Dorsolateral prefrontal cortex (tissue), 120 donors: ENCODE measurements at regions of chr5 and their contacts with region 1.

Region 1: GRCh38 chr5:124236361-124237205 is 509.9 kb downstream of the ZNF608 start:
- DNase-seq: no peak
- H3K4me3 ChIP-seq: peak overlapping the region in 12 of 59 donors; percentile 2 to 35 (median 18)
- H3K27ac ChIP-seq: peak overlapping the region; percentile 20 to 98 (median 94)
- H3K27me3 ChIP-seq: no peaks in the 10 kb centered on the region
- CTCF ChIP-seq: no peak

Region 2: DNA sequence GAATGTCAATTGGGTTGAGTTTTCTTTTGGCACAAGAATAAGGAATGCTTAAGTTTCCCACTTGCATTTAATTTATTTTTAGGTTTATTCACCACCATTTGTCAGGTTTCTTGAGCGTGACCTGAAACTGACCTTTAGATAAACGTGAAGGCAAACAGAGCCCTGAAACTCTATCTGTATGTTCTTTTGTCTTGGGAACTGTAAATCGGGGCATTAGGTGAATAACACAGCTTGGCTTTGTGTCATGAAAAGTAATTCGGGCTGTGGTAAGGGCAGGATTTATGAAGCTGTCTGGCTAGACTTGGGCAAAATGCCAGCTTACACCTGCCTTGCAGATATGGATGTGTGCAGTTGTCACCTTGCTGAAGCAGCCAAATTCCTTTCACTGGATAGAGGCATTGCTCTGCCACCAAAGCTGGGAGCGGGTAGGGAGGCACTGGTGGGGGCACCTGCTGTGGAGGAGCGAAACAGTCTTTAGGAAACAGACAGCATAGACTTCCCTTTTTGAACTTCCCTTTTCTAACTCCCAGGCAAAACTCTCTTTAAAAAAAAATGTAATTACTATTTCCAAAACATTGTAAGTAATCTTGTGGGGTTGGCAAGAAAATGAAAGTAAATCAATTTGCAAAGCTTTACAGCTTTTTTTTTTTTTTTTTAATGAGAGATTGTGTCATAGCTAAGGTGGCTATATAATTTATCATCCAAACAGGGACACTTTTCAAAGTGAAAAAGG is 179.4 kb before region 1 on chr5:
- intact Hi-C with region 1: no loop called
- DNase-seq: peak in 1 of 10 donors; percentile 29
- H3K4me3 ChIP-seq: peak overlapping the region in 43 of 59 donors; percentile 1 to 54 (median 26)
- H3K27ac ChIP-seq: peak overlapping the region in 20 of 59 donors; percentile 3 to 68 (median 36)
- H3K27me3 ChIP-seq: no peaks in the 10 kb centered on the region
- CTCF ChIP-seq: no peak

Region 3: GRCh38 chr5:124274949-124275348 is 38.4 kb after region 1 on chr5:
- intact Hi-C with region 1: no loop called
- DNase-seq: no peak
- H3K4me3 ChIP-seq: no peak overlapping the region
- H3K27ac ChIP-seq: no peak overlapping the region
- H3K27me3 ChIP-seq: no peaks in the 10 kb centered on the region
- CTCF ChIP-seq: no peak

Region 4: GRCh38 chr5:124343451-124343867 is 106.9 kb after region 1 on chr5:
- intact Hi-C with region 1: loop called in 1 of 2 experiments (anchors 10 kb)
- DNase-seq: no peak
- H3K4me3 ChIP-seq: no peak overlapping the region
- H3K27ac ChIP-seq: no peak overlapping the region
- H3K27me3 ChIP-seq: no peaks in the 10 kb centered on the region
- CTCF ChIP-seq: no peak

Region 5: DNA sequence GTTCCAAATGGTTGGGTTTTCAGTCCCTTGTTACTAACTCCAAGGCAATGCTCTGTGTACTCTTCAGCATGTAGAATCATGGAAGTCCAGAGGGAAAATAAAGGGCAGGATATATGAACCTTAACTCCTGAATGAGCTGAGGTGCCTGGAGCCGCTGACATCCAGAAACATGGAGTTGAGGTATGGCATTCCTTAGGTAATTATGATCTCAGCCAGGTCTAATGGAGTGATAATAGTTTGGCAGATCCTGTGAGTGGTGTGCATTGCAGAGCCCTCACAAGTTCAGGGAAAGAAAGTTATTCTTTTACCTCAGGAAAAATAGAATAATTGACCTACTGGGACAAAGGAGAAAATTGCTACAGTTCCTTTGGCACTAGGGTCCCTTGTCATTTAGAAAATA is 140.8 kb after region 1 on chr5:
- intact Hi-C with region 1: no loop called
- DNase-seq: no peak
- H3K4me3 ChIP-seq: no peak overlapping the region
- H3K27ac ChIP-seq: no peak overlapping the region
- H3K27me3 ChIP-seq: no peaks in the 10 kb centered on the region
- CTCF ChIP-seq: no peak